Activated CD4-positive, alpha-beta memory T cell treated with anti-CD3 and anti-CD28 coated beads for 36 hours (primary cell): ENCODE measurements at regions of chr1 and their contacts with region 1.

Region 1: DNA sequence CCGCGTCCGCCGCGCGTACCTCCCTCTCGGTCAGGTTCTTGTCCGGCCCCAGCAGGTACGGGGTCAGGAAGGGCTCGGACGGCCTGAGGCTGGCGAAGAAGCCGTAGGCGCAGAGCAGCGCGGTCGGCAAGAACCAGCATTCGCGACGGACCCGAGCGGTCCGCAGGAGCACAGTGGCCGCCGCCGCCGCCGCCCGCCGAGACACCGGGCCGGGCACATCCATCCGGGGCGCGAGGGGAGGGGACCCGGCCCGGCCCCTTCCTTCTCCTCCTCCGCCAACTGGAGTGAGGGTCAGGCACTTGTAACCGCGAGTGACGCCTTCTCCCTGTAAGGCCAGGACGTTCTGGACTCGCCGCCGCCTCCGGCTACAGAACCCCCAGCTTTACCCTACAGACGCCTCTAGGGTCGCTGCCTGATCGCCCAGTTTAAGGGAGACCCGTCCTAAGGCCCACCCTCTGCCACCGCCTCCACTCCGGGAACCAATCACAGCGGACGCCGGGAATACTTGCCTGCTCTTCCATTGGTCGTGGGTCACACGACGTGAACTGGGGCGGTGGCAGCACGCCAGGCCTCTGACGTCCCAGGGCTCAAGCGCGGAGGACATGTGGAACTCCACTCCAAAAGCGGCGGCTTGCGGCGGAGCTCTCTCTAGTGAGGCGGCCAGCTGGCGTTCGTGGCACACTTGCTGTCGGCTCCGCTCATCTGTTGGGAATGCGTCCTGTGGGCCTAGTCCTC is at the start of gene SLC19A2:
- DNase-seq: peak; percentile 96
- H3K4me3 Mint-ChIP-seq: peak within 1 kb of the TSS; percentile 79
- H3K27ac Mint-ChIP-seq: peak within 1 kb of the TSS; percentile 83
- H3K4me1 Mint-ChIP-seq: peaks cover 53% of the 10 kb centered on the region
- H3K27me3 Mint-ChIP-seq: no peaks in the 10 kb centered on the region
- total RNA-seq, gene SLC19A2: 8.6 to 9.4 TPM

Region 2: DNA sequence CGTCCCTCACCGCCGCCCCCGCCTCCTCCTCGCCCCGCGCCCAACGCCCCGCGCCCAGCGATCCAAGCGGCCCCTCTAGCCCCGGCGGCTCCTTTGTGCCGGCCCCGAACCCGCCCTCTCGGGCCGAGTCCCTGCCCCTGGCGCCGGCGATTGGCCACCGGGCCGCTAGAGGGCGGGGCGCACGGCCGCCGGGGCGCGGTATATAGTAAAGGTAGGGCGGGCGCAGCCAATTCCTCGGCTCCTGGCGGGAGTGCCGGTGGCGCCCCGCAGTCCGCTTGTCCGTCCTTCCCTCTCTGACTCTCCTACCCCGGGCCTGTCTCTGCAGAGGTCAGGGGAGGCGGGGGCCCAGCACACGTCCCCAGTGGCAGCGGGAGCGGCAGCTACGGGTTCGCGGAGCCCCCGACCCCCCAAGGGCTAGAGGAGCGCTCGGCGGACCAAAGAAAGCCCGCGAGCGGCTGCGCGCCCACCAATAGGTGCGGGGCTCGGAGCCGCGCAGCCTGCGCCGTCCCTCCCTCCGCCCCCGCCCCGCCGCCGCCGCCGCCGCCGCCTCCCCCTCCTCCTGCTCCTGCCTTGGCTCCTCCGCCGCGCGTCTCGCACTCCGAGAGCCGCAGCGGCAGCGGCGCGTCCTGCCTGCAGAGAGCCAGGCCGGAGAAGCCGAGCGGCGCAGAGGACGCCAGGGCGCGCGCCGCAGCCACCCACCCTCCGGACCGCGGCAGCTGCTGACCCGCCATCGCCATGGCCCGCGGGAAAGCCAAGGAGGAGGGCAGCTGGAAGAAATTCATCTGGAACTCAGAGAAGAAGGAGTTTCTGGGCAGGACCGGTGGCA is 379.4 kb before region 1 on chr1 and contains the start of gene ATP1B1:
- CTCF ChIA-PET with region 1: no interaction called
- POLR2A ChIA-PET with region 1: no interaction called
- intact Hi-C with region 1: loop called (anchors 10 kb)
- DNase-seq: peak; percentile 82
- H3K4me3 Mint-ChIP-seq: peak within 1 kb of the TSS; percentile 71
- H3K27ac Mint-ChIP-seq: peak within 1 kb of the TSS; percentile 79
- H3K4me1 Mint-ChIP-seq: peaks cover 36% of the 10 kb centered on the region
- H3K27me3 Mint-ChIP-seq: peaks cover 24% of the 10 kb centered on the region
- total RNA-seq, gene ATP1B1: 7.7 to 8.3 TPM

Region 3: GRCh38 chr1:169511316-169512028 is 25.8 kb after region 1 on chr1:
- CTCF ChIA-PET with region 1: interaction called, 4 read pairs
- POLR2A ChIA-PET with region 1: interaction called, 11 read pairs
- intact Hi-C with region 1: loop called (anchors 1 kb)
- DNase-seq: no peak
- H3K4me3 Mint-ChIP-seq: no peak overlapping the region
- H3K27ac Mint-ChIP-seq: no peak overlapping the region
- H3K4me1 Mint-ChIP-seq: peaks cover 26% of the 10 kb centered on the region
- H3K27me3 Mint-ChIP-seq: no peaks in the 10 kb centered on the region

Region 4: DNA sequence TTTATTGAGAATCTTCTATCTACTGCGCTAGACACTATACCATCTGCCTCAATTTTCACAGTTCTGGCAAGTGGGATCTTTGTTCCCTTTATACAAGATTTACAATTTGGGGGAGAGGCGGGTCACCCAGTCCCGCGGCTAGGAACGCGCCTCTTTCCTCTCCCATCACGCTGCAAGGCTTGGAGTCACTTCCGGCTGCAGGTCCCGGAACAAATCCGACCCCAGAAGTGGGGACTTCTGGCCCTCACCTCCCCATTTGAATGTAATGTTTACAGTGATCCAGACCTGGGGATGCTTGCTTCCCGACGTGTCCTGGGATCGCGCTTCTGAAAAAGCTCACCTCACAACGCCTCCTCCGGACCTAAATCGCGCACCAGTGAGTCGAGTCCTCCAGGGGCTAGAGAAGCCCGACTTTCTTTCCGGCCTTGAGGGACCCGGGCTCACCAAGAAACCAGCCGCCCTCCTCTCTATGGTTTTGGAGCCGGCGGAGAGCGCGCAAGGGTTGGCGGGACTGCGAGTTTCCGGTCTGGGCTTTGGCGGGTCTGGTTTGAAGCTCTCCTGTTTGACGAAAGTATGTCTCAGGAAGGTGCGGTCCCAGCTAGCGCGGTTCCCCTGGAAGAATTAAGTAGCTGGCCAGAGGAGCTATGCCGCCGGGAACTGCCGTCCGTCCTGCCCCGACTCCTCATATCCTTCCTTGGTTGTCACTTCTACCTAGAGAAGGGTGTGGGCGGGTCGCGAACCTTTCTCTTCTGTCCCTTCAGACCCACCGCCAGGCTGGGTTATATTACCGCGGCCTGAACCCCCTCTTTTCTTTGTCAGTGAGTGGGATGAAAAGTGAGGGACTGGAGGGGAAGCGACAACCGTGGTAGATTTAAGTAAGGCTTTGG is 309.1 kb after region 1 on chr1 and contains the start of gene METTL18:
- CTCF ChIA-PET with region 1: no interaction called
- POLR2A ChIA-PET with region 1: no interaction called
- intact Hi-C with region 1: loop called (anchors 1 kb)
- DNase-seq: peak; percentile 96
- H3K4me3 Mint-ChIP-seq: peak within 1 kb of the TSS; percentile 100
- H3K27ac Mint-ChIP-seq: peak within 1 kb of the TSS; percentile 99
- H3K4me1 Mint-ChIP-seq: peaks cover 44% of the 10 kb centered on the region
- H3K27me3 Mint-ChIP-seq: no peaks in the 10 kb centered on the region
- total RNA-seq, gene METTL18: 10.8 to 10.9 TPM

Region 5: GRCh38 chr1:170074250-170075157 is 588.8 kb after region 1 on chr1 and contains the start of gene KIFAP3:
- CTCF ChIA-PET with region 1: no interaction called
- POLR2A ChIA-PET with region 1: no interaction called
- intact Hi-C with region 1: loop called (anchors 10 kb)
- DNase-seq: peak; percentile 98
- H3K4me3 Mint-ChIP-seq: peak within 1 kb of the TSS; percentile 96
- H3K27ac Mint-ChIP-seq: peak within 1 kb of the TSS; percentile 85
- H3K4me1 Mint-ChIP-seq: peaks cover 46% of the 10 kb centered on the region
- H3K27me3 Mint-ChIP-seq: no peaks in the 10 kb centered on the region
- total RNA-seq, gene KIFAP3: 15.6 to 15.7 TPM